Caco-2 (cell line): ENCODE measurements at regions of chr1 and their contacts with region 1.

Region 1: DNA sequence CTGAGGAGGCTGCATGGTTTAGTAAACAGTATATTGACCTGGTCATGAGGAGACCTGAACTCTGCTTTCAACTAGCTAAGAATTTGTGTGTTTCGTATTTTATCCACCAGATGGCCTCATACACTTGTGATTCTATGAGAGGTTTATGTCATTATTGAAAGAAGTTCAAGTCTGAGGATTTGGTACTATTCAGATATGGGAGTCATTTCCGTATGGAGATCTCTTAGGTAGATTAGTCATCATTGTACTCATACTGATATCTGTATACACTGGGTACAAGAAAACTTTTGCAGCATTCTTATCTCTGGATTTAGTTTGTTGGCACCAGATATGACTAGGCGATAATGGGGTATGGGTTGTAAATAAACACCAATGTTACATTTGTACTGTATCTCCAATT is 26.6 kb downstream of the ATF6 start:
- DNase-seq: peak in 1 of 2 experiments; percentile 50
- H3K4me3 ChIP-seq: no peak overlapping the region
- H3K4me3 Mint-ChIP-seq: no peak overlapping the region
- H3K27ac Mint-ChIP-seq: no peak overlapping the region
- H3K4me1 ChIP-seq: no peaks in the 10 kb centered on the region
- H3K4me1 Mint-ChIP-seq: no peaks in the 10 kb centered on the region
- H3K27me3 ChIP-seq: no peaks in the 10 kb centered on the region
- H3K27me3 Mint-ChIP-seq: no peaks in the 10 kb centered on the region
- CTCF ChIP-seq: peak; percentile 34 to 56

Region 2: DNA sequence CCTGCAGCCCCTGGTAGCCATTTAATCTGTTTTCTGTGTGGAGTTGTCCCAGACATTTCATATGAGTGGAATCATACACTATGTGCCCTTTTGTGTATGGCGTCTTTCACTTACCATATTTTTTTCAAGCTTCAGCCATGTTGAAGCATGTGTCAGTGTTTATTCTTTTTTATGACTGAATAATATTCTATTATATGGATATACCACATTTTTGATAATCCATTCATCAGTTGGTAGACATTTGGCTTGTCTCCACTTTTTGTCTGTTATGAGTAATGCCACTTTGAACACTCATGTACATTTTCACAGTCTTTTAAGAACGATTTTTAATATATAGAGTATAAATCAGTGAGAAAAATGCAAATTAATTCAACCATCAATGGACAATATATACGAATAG is 18.0 kb after region 1 on chr1:
- CTCF ChIA-PET with region 1: no interaction called
- POLR2A ChIA-PET with region 1: no interaction called
- intact Hi-C with region 1: no loop called
- DNase-seq: no peak
- H3K4me3 ChIP-seq: no peak overlapping the region
- H3K4me3 Mint-ChIP-seq: no peak overlapping the region
- H3K27ac Mint-ChIP-seq: no peak overlapping the region
- H3K4me1 ChIP-seq: no peaks in the 10 kb centered on the region
- H3K4me1 Mint-ChIP-seq: no peaks in the 10 kb centered on the region
- H3K27me3 ChIP-seq: no peaks in the 10 kb centered on the region
- H3K27me3 Mint-ChIP-seq: no peaks in the 10 kb centered on the region
- CTCF ChIP-seq: no peak

Region 3: DNA sequence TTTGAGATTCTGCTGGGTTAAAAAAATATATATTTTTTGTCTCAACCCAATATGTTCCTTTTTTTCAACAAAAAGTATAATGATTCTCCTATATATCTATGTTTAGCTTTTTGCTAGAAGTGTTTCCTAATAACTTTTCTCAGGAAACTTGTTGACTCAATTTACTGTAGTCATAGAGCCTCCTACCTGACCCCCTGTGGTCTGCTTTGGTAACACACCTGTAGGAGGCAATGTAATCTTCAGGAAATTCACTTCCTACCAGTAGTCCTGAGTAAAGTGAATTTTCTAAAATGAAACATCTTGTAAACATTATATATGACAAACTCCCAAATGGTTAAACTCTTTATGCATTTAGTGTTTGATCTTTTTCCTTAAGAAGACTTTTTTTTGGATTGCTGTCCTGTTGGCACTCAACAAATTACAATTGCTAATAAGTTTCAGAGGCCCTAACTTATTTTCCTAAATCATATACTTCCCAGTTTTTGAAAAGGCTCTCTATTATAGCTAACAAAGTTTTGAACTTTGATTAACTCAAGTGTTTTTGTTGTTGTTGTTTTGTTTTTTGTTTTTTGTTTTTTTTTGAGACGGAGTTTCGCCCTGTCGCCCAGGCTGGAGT is 112.6 kb after region 1 on chr1:
- CTCF ChIA-PET with region 1: no interaction called
- POLR2A ChIA-PET with region 1: no interaction called
- intact Hi-C with region 1: loop called (anchors 1 kb)
- DNase-seq: peak; percentile 44 to 55
- H3K4me3 ChIP-seq: no peak overlapping the region
- H3K4me3 Mint-ChIP-seq: no peak overlapping the region
- H3K27ac Mint-ChIP-seq: no peak overlapping the region
- H3K4me1 ChIP-seq: peaks cover 8% of the 10 kb centered on the region
- H3K4me1 Mint-ChIP-seq: peaks cover 7% of the 10 kb centered on the region
- H3K27me3 ChIP-seq: no peaks in the 10 kb centered on the region
- H3K27me3 Mint-ChIP-seq: no peaks in the 10 kb centered on the region
- CTCF ChIP-seq: peak; percentile 45 to 87

Region 4: GRCh38 chr1:162023547-162024501 is 231.1 kb after region 1 on chr1 and contains the start of gene OLFML2B:
- CTCF ChIA-PET with region 1: interaction called, 14 read pairs
- POLR2A ChIA-PET with region 1: no interaction called
- intact Hi-C with region 1: loop called (anchors 1 kb)
- DNase-seq: peak; percentile 54 to 69
- H3K4me3 ChIP-seq: peak within 1 kb of the TSS; percentile 55
- H3K4me3 Mint-ChIP-seq: peak within 1 kb of the TSS; percentile 78
- H3K27ac Mint-ChIP-seq: no peak within 1 kb of the TSS
- H3K4me1 ChIP-seq: no peaks in the 10 kb centered on the region; the same call in 1 of the 2 replicates
- H3K4me1 Mint-ChIP-seq: no peaks in the 10 kb centered on the region
- H3K27me3 ChIP-seq: peaks cover 1% of the 10 kb centered on the region; the same call in 1 of the 2 replicates
- H3K27me3 Mint-ChIP-seq: peaks cover 6% of the 10 kb centered on the region
- CTCF ChIP-seq: no peak
- total RNA-seq, gene OLFML2B: 0.43 and 0.56 TPM in 2 replicates

Region 5: GRCh38 chr1:162035241-162035640 is 242.5 kb after region 1 on chr1:
- CTCF ChIA-PET with region 1: interaction called, 202 read pairs
- POLR2A ChIA-PET with region 1: interaction called, 3 read pairs
- intact Hi-C with region 1: loop called (anchors 1 kb)
- DNase-seq: no peak
- H3K4me3 ChIP-seq: no peak overlapping the region
- H3K4me3 Mint-ChIP-seq: no peak overlapping the region
- H3K27ac Mint-ChIP-seq: no peak overlapping the region
- H3K4me1 ChIP-seq: no peaks in the 10 kb centered on the region
- H3K4me1 Mint-ChIP-seq: peaks cover 6% of the 10 kb centered on the region
- H3K27me3 ChIP-seq: no peaks in the 10 kb centered on the region
- H3K27me3 Mint-ChIP-seq: peaks cover 15% of the 10 kb centered on the region
- CTCF ChIP-seq: no peak